Panc1 (cell line): ENCODE measurements at regions of chr17 and their contacts with region 1.

Region 1: GRCh38 chr17:42744806-42745617 is at the start of gene EZH1:
- DNase-seq: no peak
- ATAC-seq: peak; percentile 96
- H3K4me3 ChIP-seq: peak within 1 kb of the TSS; percentile 58 to 70
- H3K27ac ChIP-seq: peak within 1 kb of the TSS; percentile 79
- H3K4me1 ChIP-seq: no peaks in the 10 kb centered on the region
- H3K27me3 ChIP-seq: no peaks in the 10 kb centered on the region
- CTCF ChIP-seq: no peak
- total RNA-seq, gene EZH1: 17.7 TPM

Region 2: GRCh38 chr17:42766124-42766523 is 21.1 kb after region 1 on chr17:
- CTCF ChIA-PET with region 1: interaction called, 12 read pairs
- POLR2A ChIA-PET with region 1: no interaction called
- in situ Hi-C with region 1: no loop called
- intact Hi-C with region 1: no loop called
- DNase-seq: no peak
- ATAC-seq: no peak
- H3K4me3 ChIP-seq: no peak overlapping the region
- H3K27ac ChIP-seq: no peak overlapping the region
- H3K4me1 ChIP-seq: no peaks in the 10 kb centered on the region
- H3K27me3 ChIP-seq: no peaks in the 10 kb centered on the region
- CTCF ChIP-seq: no peak

Region 3: GRCh38 chr17:42783062-42783777 is 38.2 kb after region 1 on chr17:
- CTCF ChIA-PET with region 1: no interaction called
- POLR2A ChIA-PET with region 1: no interaction called
- in situ Hi-C with region 1: no loop called
- intact Hi-C with region 1: no loop called
- DNase-seq: no peak
- ATAC-seq: no peak
- H3K4me3 ChIP-seq: no peak overlapping the region
- H3K27ac ChIP-seq: no peak overlapping the region
- H3K4me1 ChIP-seq: peaks cover 19% of the 10 kb centered on the region
- H3K27me3 ChIP-seq: no peaks in the 10 kb centered on the region
- CTCF ChIP-seq: no peak